ENCODE measurements at regions of chr5 and their contacts with region 1.

Region 1: DNA sequence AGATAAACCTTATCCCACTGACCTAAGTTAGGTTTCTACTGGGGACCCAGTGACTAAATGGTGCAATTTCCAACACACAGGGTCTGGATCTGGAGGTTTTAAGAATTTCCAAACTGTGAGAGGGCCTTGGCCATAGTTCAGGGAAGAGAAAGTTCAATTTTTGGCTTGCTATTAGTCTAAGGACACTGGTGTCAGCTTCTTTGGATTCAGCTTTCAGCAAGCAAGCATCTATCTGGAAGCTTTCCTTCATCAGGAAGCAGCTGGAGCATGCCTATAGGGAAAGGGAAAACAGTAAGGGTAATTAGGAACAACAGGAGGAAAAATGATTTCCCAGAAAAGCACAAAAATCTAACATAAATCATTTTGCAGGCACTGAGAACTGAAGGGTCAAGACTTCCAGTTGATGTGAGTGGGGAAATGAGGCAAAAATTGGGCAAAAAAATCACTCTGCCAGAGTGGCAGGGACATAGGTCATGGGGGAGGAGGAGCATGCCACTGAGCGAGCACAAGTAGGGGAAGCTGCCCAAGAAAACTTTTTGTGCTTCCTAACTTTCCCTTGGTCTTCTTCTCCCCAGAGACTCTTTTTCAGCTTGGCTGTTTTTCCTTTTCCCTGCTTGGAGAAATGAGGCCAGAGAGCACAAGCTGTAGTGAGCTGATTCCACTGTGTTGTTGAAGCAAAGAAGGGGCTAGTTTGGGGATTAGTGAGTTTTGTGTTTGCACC is 299.6 kb downstream of the FGF10 start:
- DNase-seq: no peak
- ATAC-seq: no peak
- H3K4me3 ChIP-seq: no peak overlapping the region
- H3K27ac ChIP-seq: no peak overlapping the region
- H3K4me1 ChIP-seq: no peaks in the 10 kb centered on the region
- H3K27me3 ChIP-seq: no peaks in the 10 kb centered on the region
- CTCF ChIP-seq: no peak

Region 2: GRCh38 chr5:43174586-43174985 is 915.0 kb before region 1 on chr5:
- CTCF ChIA-PET with region 1: no interaction called
- POLR2A ChIA-PET with region 1: no interaction called
- in situ Hi-C with region 1: no loop called
- intact Hi-C with region 1: no loop called
- DNase-seq: no peak
- ATAC-seq: no peak
- H3K4me3 ChIP-seq: no peak overlapping the region
- H3K27ac ChIP-seq: no peak overlapping the region
- H3K4me1 ChIP-seq: no peaks in the 10 kb centered on the region
- H3K27me3 ChIP-seq: no peaks in the 10 kb centered on the region
- CTCF ChIP-seq: no peak

Region 3: GRCh38 chr5:43422143-43422542 is 667.4 kb before region 1 on chr5:
- CTCF ChIA-PET with region 1: interaction called, 12 read pairs
- POLR2A ChIA-PET with region 1: no interaction called
- in situ Hi-C with region 1: no loop called
- intact Hi-C with region 1: no loop called
- DNase-seq: peak; percentile 30
- ATAC-seq: peak; percentile 86
- H3K4me3 ChIP-seq: no peak overlapping the region
- H3K27ac ChIP-seq: peak overlapping the region; percentile 57; the same call in 1 of the 2 replicates
- H3K4me1 ChIP-seq: peaks cover 10% of the 10 kb centered on the region; the same call in 1 of the 2 replicates
- H3K27me3 ChIP-seq: no peaks in the 10 kb centered on the region
- CTCF ChIP-seq: no peak

Region 4: GRCh38 chr5:44035617-44036016 is 54.0 kb before region 1 on chr5:
- CTCF ChIA-PET with region 1: no interaction called
- POLR2A ChIA-PET with region 1: no interaction called
- in situ Hi-C with region 1: no loop called
- intact Hi-C with region 1: no loop called
- DNase-seq: no peak
- ATAC-seq: no peak
- H3K4me3 ChIP-seq: no peak overlapping the region
- H3K27ac ChIP-seq: no peak overlapping the region
- H3K4me1 ChIP-seq: no peaks in the 10 kb centered on the region
- H3K27me3 ChIP-seq: no peaks in the 10 kb centered on the region
- CTCF ChIP-seq: no peak